PC-3 (cell line): ENCODE measurements at regions of chr11 and their contacts with region 1.

Region 1: GRCh38 chr11:19903620-19904069 is 191.0 kb downstream of the NAV2 start:
- DNase-seq: peak; percentile 78
- ATAC-seq: peak; percentile 86
- H3K4me3 ChIP-seq: no peak overlapping the region
- H3K27ac ChIP-seq: no peak overlapping the region
- H3K4me1 ChIP-seq: no peaks in the 10 kb centered on the region
- H3K27me3 ChIP-seq: no peaks in the 10 kb centered on the region
- CTCF ChIP-seq: peak; percentile 84

Region 2: DNA sequence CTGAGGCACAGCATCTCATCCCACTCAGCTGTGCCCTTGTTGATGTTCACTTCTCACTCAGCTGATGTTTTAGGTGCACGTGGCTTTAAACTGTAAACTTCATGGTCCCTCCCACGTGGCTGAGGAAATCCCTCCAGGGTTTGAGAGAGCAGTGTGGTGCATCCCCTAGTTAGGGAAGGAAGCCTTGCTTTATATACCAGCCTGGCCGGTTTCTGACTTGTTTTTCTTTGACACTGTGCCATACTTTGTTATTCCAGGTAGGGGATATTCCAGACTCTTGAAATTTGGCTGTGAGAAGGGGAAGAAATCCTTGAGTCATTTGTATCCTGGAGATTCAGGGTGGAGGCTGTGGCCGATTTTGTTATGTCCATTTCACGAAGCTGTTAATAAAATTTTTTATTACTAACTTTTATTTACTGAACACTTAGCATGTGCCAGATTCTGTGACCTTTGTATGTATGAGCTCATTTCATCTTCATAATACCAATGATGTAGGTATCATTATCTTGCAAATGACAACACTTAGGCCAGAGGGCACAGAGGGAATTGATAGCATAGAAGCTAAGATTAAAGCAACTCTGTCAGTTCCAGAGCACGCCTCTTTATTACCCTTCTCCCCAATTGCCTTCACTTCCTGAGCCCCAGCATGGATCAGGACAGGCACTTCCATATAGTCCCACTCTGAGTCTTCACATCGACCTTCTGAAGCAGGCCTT is 74.4 kb before region 1 on chr11:
- CTCF ChIA-PET with region 1: interaction called, 6 read pairs
- POLR2A ChIA-PET with region 1: no interaction called
- intact Hi-C with region 1: loop called (anchors 5 kb)
- DNase-seq: peak; percentile 89
- ATAC-seq: peak; percentile 87
- H3K4me3 ChIP-seq: no peak overlapping the region
- H3K27ac ChIP-seq: peak overlapping the region; percentile 72
- H3K4me1 ChIP-seq: peaks cover 15% of the 10 kb centered on the region
- H3K27me3 ChIP-seq: no peaks in the 10 kb centered on the region
- CTCF ChIP-seq: no peak

Region 3: DNA sequence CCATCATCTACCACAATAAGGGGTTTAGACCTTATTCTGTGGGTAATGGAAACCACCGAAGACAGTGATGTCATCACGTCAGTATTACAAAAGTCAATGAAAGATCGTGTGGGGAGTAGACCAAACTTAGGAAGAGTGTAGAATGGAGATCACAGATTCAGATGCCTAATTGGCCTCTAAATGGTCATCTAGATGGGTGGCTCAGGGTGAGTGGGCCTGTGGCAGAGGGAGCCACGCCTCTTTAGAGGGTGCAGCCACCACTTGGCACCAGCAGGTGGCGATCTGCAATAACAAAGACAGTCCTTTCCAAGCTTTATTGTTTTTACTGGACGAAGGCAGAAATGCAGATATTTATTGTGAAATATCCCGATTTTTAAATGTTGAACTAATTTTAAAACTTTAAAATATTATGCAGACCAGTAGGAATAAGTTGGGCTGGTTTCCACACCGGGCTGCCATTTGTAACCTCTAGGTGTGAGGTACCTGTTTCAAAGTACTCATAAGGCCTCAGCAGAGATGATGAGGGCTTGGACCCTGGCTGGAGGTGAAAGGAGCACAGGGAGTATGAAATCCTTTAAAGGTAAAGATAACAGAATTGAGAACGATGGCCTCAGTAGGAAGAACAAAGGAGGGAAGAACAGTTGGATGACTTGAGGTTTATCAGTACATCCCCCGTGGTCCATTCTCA is 34.7 kb after region 1 on chr11:
- CTCF ChIA-PET with region 1: interaction called, 4 read pairs
- POLR2A ChIA-PET with region 1: no interaction called
- intact Hi-C with region 1: loop called (anchors 2 kb)
- DNase-seq: peak; percentile 73
- ATAC-seq: peak; percentile 53
- H3K4me3 ChIP-seq: no peak overlapping the region
- H3K27ac ChIP-seq: peak overlapping the region; percentile 24; the same call in 1 of the 2 replicates
- H3K4me1 ChIP-seq: peaks cover 20% of the 10 kb centered on the region
- H3K27me3 ChIP-seq: no peaks in the 10 kb centered on the region
- CTCF ChIP-seq: peak; percentile 92

Region 4: DNA sequence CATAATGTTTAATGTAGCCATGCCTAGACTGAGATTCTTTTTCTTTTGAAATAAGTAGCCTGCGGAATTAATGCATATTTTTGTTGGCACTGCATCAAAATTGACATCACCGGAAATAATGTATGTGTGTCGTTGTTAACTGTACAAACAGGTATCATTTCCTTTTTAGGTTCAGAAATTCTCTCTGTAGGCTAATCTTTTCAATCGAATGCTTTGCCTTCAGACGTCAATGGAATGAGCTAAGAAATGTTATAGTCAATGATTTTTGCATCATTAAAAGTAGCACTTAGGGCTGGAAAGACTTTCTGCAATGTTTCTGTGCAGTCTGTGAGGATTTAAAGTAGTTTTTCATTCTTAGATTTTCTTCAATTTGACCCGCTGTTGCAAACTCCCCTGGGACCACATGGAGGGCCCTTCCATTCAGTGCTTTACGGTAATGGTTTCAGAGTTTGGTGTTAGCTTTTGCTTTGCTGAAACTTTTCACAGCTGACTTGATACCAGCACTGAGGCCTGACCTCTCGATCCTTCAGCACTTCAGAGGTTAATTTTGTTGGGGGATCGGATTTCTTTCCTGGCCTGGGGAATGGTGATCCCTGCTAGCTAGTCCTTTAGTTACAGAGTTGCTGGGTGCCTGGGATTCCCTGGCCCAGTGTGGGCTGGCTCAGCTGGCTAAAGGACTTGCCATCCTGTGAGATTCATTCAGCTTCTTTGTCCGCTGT is 118.9 kb after region 1 on chr11:
- CTCF ChIA-PET with region 1: no interaction called
- POLR2A ChIA-PET with region 1: no interaction called
- intact Hi-C with region 1: no loop called
- DNase-seq: peak; percentile 68
- ATAC-seq: no peak; the same call in 1 of the 2 replicates
- H3K4me3 ChIP-seq: no peak overlapping the region
- H3K27ac ChIP-seq: peak overlapping the region; percentile 77
- H3K4me1 ChIP-seq: peaks cover 33% of the 10 kb centered on the region
- H3K27me3 ChIP-seq: no peaks in the 10 kb centered on the region
- CTCF ChIP-seq: no peak

Region 5: GRCh38 chr11:20070459-20070858 is 166.8 kb after region 1 on chr11:
- CTCF ChIA-PET with region 1: no interaction called
- POLR2A ChIA-PET with region 1: no interaction called
- intact Hi-C with region 1: no loop called
- DNase-seq: peak; percentile 30
- ATAC-seq: peak; percentile 88
- H3K4me3 ChIP-seq: no peak overlapping the region
- H3K27ac ChIP-seq: peak overlapping the region; percentile 44
- H3K4me1 ChIP-seq: peaks cover 4% of the 10 kb centered on the region; the same call in 1 of the 2 replicates
- H3K27me3 ChIP-seq: no peaks in the 10 kb centered on the region
- CTCF ChIP-seq: no peak